Heart right ventricle (tissue), 16 donors: ENCODE measurements at regions of chr12 and their contacts with region 1.

Region 1: DNA sequence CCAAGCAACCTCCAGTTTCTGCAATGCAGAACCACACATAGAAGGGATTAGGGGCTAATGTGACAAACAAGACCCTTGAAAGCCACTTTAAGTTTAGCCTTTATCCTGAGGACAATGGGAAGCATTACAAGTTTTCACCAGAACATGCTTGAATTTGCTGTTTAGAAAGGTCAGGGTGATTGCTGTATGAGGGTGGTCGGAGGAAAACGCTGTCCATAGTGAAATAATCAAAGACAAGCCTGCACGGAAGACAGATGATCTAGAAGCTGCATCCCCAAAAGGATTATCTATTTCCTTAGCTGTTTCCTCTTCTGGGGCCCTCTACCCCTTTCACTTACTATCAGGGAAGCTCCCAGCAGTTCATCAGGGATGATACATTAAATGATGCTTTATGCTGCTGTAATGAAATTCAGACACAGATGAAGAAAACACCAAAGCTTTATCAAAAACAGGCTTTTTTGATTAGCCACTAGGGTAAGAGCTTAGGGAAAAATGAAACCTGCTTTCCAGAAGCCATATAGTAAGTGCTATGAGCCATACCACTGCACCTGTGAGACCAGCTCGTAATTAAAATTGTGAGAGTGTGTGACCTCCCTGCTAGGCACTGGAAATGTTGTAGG is 6.5 kb downstream of the HAL start:
- DNase-seq: no peak
- ATAC-seq: no peak
- H3K4me3 ChIP-seq: no peak overlapping the region
- H3K27ac ChIP-seq: no peak overlapping the region
- H3K4me1 ChIP-seq: peaks cover 0 to 6% (median 0%) of the 10 kb centered on the region in 9 donors
- H3K27me3 ChIP-seq: peaks cover 0 to 23% (median 0%) of the 10 kb centered on the region in 7 donors
- CTCF ChIP-seq: no peak

Region 2: GRCh38 chr12:95918194-95918993 is 71.2 kb before region 1 on chr12:
- intact Hi-C with region 1: loop called in 1 of 10 experiments (anchors 5 kb)
- DNase-seq: peak in 1 of 2 donors; percentile 35
- ATAC-seq: peak in 6 of 8 donors; percentile 51 to 81 (median 70)
- H3K4me3 ChIP-seq: no peak overlapping the region
- H3K27ac ChIP-seq: no peak overlapping the region
- H3K4me1 ChIP-seq: no peaks in the 10 kb centered on the region
- H3K27me3 ChIP-seq: peaks cover 0 to 9% (median 0%) of the 10 kb centered on the region in 7 donors
- CTCF ChIP-seq: peak in 8 of 9 donors; percentile 55 to 88 (median 78)

Region 3: GRCh38 chr12:96208801-96209549 is 219.4 kb after region 1 on chr12:
- intact Hi-C with region 1: no loop called
- DNase-seq: no peak
- ATAC-seq: peak; percentile 63 to 82 (median 75)
- H3K4me3 ChIP-seq: peak overlapping the region in 4 of 10 donors; percentile 8 to 21 (median 14)
- H3K27ac ChIP-seq: peak overlapping the region in 9 of 10 donors; percentile 53 to 82 (median 76)
- H3K4me1 ChIP-seq: peaks cover 0 to 100% (median 90%) of the 10 kb centered on the region in 9 donors
- H3K27me3 ChIP-seq: no peaks in the 10 kb centered on the region
- CTCF ChIP-seq: peak in 6 of 9 donors; percentile 8 to 51 (median 34)

Region 4: GRCh38 chr12:96501139-96501761 is 511.6 kb after region 1 on chr12:
- intact Hi-C with region 1: no loop called
- DNase-seq: peak; percentile 36 to 42
- ATAC-seq: peak; percentile 61 to 95 (median 86)
- H3K4me3 ChIP-seq: no peak overlapping the region
- H3K27ac ChIP-seq: peak overlapping the region; percentile 42 to 88 (median 76)
- H3K4me1 ChIP-seq: peaks cover 4 to 36% (median 21%) of the 10 kb centered on the region in 9 donors
- H3K27me3 ChIP-seq: no peaks in the 10 kb centered on the region
- CTCF ChIP-seq: no peak